Mammary epithelial cell (primary cell): ENCODE measurements at regions of chr20 and their contacts with region 1.

Region 1: DNA sequence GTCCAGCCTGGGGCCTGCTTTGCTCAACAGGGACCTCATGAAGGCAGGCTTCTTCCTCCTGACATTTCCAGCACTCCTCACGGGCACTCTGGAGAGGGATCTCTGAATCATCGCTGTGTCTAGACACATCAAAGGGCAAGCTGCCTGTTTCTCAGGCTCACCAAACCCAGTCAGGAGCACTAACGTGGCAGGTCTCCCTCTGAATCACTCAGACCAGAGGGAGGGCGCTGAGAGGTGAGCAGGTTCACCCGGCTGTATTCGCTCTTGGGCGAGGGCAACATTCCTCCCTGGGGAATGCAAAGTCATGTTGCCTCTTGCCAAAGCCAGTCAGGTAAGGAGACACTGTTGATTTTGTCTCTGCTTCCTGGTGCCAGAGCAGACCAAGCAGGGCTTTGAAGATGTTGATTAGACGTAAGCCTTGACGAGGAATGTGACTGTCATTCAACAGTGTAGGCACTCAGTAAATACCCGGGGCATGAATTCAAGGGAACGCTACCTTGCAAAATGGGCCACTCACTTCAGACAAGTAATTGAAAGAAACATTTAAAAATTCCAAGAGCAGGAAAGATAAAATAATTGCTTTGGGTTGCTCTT is 50.1 kb downstream of the CYP24A1 start:
- DNase-seq: peak; percentile 100
- H3K4me3 ChIP-seq: no peak overlapping the region
- H3K27ac ChIP-seq: peak overlapping the region; percentile 98
- H3K4me1 ChIP-seq: peaks cover 50% of the 10 kb centered on the region
- H3K27me3 ChIP-seq: no peaks in the 10 kb centered on the region
- CTCF ChIP-seq: no peak

Region 2: GRCh38 chr20:54025251-54025771 is 98.4 kb before region 1 on chr20:
- CTCF ChIA-PET with region 1: no interaction called
- dilution Hi-C with region 1: no loop called
- in situ Hi-C with region 1: no loop called
- intact Hi-C with region 1: no loop called
- DNase-seq: no peak
- H3K4me3 ChIP-seq: no peak overlapping the region
- H3K27ac ChIP-seq: no peak overlapping the region
- H3K4me1 ChIP-seq: no peaks in the 10 kb centered on the region
- H3K27me3 ChIP-seq: no peaks in the 10 kb centered on the region
- CTCF ChIP-seq: no peak

Region 3: DNA sequence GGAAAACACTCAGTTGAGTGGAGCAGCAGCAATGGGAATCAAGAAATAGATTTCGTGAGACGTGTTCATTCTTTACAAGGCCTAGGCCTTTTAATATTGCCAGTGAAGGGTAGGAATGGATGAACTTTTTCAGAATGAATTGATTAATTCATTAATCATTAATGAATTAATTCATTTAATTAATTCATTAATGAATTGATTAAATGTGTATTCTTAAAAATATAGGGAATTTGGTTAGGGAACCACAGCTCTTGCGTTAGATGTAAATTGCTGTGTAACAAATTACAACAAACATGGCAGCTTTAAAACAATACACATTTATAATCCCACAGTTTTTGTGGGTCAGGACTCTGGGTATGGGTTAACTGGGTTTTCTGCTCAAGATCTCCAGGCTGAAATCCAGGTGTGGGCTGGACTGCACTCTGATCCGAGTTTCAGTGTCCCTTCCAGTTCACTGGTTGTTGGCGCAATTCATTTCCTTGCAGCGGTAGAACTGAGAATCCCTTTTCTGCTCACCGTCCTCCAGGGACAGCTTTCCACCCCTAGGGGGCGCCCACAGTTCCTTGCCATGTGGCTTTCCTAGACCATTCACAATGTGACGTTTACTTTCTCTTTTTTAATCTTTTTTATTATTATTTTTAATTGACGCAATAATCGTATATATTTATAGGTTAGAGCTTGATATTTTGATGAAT is 20.5 kb before region 1 on chr20:
- CTCF ChIA-PET with region 1: interaction called, 5 read pairs
- dilution Hi-C with region 1: no loop called
- in situ Hi-C with region 1: no loop called
- intact Hi-C with region 1: loop called (anchors 1 kb)
- DNase-seq: no peak
- H3K4me3 ChIP-seq: no peak overlapping the region
- H3K27ac ChIP-seq: no peak overlapping the region
- H3K4me1 ChIP-seq: peaks cover 32% of the 10 kb centered on the region
- H3K27me3 ChIP-seq: no peaks in the 10 kb centered on the region
- CTCF ChIP-seq: peak; percentile 64 to 74

Region 4: GRCh38 chr20:54110041-54110841 is 13.4 kb before region 1 on chr20:
- CTCF ChIA-PET with region 1: interaction called, 20 read pairs
- dilution Hi-C with region 1: no loop called
- in situ Hi-C with region 1: no loop called
- intact Hi-C with region 1: loop called (anchors 1 kb)
- DNase-seq: peak; percentile 62
- H3K4me3 ChIP-seq: no peak overlapping the region
- H3K27ac ChIP-seq: peak overlapping the region; percentile 35
- H3K4me1 ChIP-seq: peaks cover 38% of the 10 kb centered on the region
- H3K27me3 ChIP-seq: no peaks in the 10 kb centered on the region
- CTCF ChIP-seq: no peak

Region 5: DNA sequence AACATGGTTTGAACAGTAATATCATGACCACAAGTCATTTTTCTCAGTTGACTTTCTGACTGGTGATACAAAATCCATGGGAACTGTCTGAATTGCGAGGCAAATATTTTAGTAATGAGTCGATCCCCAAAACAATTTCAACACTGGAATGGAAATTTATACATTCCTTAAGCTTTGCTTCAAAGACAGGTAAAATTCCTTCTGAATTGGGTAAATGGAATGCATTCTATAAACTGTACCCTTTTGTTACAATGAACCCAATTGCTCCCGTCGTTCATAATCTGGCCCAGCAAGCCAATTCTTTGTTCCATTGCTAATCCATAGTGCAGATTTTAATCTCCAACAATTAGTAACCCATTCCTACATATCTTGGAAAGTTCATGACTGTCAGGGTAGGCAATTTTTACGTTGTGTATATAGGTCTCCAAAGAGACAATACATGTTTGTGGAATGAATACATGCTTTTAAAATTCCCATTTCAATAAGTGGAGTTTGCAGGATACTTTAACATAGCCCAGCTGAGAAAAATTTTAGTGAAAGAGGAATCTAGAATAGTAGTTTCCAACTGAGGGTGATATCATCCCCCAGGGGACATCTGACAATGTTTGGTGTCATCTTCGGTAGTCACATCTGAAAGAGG is 17.4 kb after region 1 on chr20:
- CTCF ChIA-PET with region 1: no interaction called
- dilution Hi-C with region 1: no loop called
- in situ Hi-C with region 1: no loop called
- intact Hi-C with region 1: loop called (anchors 1 kb)
- DNase-seq: peak; percentile 91
- H3K4me3 ChIP-seq: no peak overlapping the region
- H3K27ac ChIP-seq: peak overlapping the region; percentile 90
- H3K4me1 ChIP-seq: peaks cover 33% of the 10 kb centered on the region
- H3K27me3 ChIP-seq: no peaks in the 10 kb centered on the region
- CTCF ChIP-seq: no peak